G401 (cell line): ENCODE measurements at regions of chr9 and their contacts with region 1.

Region 1: DNA sequence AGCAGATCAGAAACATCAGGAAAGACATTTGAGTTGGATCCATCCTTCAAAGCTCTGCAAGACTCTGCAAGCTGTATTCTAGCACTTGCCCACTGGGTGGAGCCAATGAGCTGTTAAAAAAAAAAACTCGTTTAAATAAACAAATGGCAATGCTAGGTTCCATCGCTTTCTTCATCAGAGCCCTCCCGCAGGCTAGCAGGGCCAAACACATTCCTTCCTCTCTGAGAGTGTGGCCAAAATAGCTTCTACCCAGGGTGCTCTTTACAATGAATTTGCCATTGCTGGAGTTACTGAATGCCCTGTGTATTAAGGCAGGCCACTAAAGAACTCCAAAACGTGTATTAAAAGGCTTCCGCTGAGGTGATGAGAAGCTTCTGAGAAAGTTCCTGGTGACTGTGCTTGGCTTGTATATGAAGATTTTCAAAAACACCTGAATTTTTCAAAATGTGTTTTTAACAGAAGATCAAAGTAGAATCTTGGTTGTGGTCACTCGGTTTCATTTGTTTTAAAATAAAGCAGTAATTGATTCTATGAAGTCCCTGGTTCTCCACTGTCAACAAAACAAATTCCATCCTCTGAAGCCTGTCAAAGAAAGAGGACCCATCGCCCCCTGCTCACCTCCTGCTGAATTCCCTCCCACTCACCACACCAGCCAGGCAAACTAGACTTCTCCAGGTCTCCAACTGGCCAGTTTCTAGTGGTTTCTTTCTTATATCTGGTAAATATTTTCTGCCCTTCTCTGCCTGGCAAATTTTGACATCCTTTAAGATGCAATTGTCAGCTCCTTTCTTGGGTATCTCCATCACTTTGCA is 36.5 kb upstream of the EQTN start:
- DNase-seq: peak; percentile 94

Region 2: DNA sequence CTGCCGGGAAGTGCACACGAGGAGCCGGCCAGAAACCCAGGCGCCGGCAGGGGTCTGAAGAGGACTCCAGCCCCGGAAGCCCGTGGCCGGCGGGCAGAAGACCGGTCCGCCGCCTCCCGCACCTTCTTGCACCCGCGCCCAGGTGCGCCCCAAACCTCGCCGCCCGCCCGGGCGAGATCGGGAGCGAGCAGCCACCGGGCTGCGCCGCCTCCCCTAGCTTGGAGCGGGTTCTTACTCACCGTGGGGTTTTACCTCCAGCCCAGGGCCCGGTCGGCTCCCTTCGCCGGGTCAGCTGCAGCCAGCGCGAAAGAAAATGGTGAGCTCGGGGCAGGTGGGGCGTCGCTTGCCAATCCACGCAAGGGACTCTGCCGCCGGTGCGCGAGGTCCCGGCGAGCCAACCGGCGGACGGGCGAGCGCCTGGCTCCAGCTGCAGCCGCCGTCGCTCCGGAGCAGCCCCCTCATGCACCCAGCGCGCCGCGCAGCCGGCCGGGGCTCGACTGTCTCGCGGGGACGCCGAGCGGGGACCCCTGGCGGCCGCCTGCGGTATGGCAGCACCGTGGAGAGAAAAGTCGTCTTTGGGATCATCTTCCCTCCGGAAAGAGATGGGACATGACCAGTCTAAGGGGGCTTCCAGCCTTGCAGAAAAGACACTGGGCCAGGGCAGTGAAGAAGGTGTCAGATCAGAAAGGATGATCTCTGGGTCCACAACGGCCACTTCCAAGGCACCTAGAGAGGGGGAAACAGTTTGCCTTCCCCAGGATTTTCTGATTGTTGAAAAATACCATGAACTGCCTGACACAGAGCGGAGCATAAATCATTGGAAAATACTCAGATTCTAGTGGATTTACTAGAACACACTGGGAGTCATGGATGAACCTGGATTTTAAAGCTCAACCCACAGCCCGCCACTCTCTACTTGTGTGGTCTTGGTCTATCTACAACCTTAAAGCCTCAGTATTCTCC is 196.2 kb after region 1 on chr9 and contains the start of gene MOB3B:
- in situ Hi-C with region 1: loop called (anchors 25 kb)
- DNase-seq: peak; percentile 72
- total RNA-seq, gene MOB3B: not detected in 2 replicates